ENCODE measurements at regions of chr1 and their contacts with region 1.

Region 1: DNA sequence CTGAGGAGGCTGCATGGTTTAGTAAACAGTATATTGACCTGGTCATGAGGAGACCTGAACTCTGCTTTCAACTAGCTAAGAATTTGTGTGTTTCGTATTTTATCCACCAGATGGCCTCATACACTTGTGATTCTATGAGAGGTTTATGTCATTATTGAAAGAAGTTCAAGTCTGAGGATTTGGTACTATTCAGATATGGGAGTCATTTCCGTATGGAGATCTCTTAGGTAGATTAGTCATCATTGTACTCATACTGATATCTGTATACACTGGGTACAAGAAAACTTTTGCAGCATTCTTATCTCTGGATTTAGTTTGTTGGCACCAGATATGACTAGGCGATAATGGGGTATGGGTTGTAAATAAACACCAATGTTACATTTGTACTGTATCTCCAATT is 26.6 kb downstream of the ATF6 start:
- DNase-seq: no peak
- H3K4me3 Mint-ChIP-seq: no peak overlapping the region
- H3K27ac Mint-ChIP-seq: no peak overlapping the region
- H3K4me1 Mint-ChIP-seq: peaks cover 13% of the 10 kb centered on the region
- H3K27me3 Mint-ChIP-seq: no peaks in the 10 kb centered on the region

Region 2: GRCh38 chr1:161766102-161766981 is 26.4 kb before region 1 on chr1 and contains the start of gene ATF6:
- CTCF ChIA-PET with region 1: interaction called, 8 read pairs
- intact Hi-C with region 1: loop called (anchors 2 kb)
- DNase-seq: peak; percentile 91
- H3K4me3 Mint-ChIP-seq: peak within 1 kb of the TSS; percentile 96
- H3K27ac Mint-ChIP-seq: peak within 1 kb of the TSS; percentile 97
- H3K4me1 Mint-ChIP-seq: peaks cover 41% of the 10 kb centered on the region
- H3K27me3 Mint-ChIP-seq: no peaks in the 10 kb centered on the region
- total RNA-seq, gene ATF6: 23.5 to 24.6 TPM

Region 3: GRCh38 chr1:161843156-161843555 is 50.4 kb after region 1 on chr1:
- CTCF ChIA-PET with region 1: interaction called, 5 read pairs
- intact Hi-C with region 1: loop called (anchors 5 kb)
- DNase-seq: peak; percentile 6
- H3K4me3 Mint-ChIP-seq: no peak overlapping the region
- H3K27ac Mint-ChIP-seq: no peak overlapping the region
- H3K4me1 Mint-ChIP-seq: peaks cover 30% of the 10 kb centered on the region
- H3K27me3 Mint-ChIP-seq: no peaks in the 10 kb centered on the region

Region 4: GRCh38 chr1:161915051-161915503 is 122.3 kb after region 1 on chr1:
- CTCF ChIA-PET with region 1: interaction called, 6 read pairs
- intact Hi-C with region 1: loop called (anchors 2 kb)
- DNase-seq: peak; percentile 83
- H3K4me3 Mint-ChIP-seq: no peak overlapping the region
- H3K27ac Mint-ChIP-seq: no peak overlapping the region
- H3K4me1 Mint-ChIP-seq: peaks cover 35% of the 10 kb centered on the region
- H3K27me3 Mint-ChIP-seq: no peaks in the 10 kb centered on the region

Region 5: GRCh38 chr1:162023547-162024501 is 231.1 kb after region 1 on chr1 and contains the start of gene OLFML2B:
- CTCF ChIA-PET with region 1: interaction called, 35 read pairs
- intact Hi-C with region 1: loop called (anchors 1 kb)
- DNase-seq: peak; percentile 65
- H3K4me3 Mint-ChIP-seq: peak within 1 kb of the TSS; percentile 86
- H3K27ac Mint-ChIP-seq: no peak within 1 kb of the TSS
- H3K4me1 Mint-ChIP-seq: peaks cover 7% of the 10 kb centered on the region
- H3K27me3 Mint-ChIP-seq: peaks cover 18% of the 10 kb centered on the region
- total RNA-seq, gene OLFML2B: 1.7 to 2.3 TPM

Region 6: GRCh38 chr1:162040681-162041080 is 247.9 kb after region 1 on chr1:
- CTCF ChIA-PET with region 1: interaction called, 173 read pairs
- intact Hi-C with region 1: loop called (anchors 1 kb)
- DNase-seq: no peak
- H3K4me3 Mint-ChIP-seq: no peak overlapping the region
- H3K27ac Mint-ChIP-seq: no peak overlapping the region
- H3K4me1 Mint-ChIP-seq: peaks cover 4% of the 10 kb centered on the region
- H3K27me3 Mint-ChIP-seq: peaks cover 6% of the 10 kb centered on the region

Region 7: GRCh38 chr1:162357681-162358266 is 565.0 kb after region 1 on chr1:
- CTCF ChIA-PET with region 1: no interaction called
- intact Hi-C with region 1: no loop called
- DNase-seq: peak; percentile 13
- H3K4me3 Mint-ChIP-seq: no peak overlapping the region
- H3K27ac Mint-ChIP-seq: no peak overlapping the region
- H3K4me1 Mint-ChIP-seq: no peaks in the 10 kb centered on the region
- H3K27me3 Mint-ChIP-seq: no peaks in the 10 kb centered on the region